ENCODE measurements at regions of chr2 and their contacts with region 1.

Region 1: DNA sequence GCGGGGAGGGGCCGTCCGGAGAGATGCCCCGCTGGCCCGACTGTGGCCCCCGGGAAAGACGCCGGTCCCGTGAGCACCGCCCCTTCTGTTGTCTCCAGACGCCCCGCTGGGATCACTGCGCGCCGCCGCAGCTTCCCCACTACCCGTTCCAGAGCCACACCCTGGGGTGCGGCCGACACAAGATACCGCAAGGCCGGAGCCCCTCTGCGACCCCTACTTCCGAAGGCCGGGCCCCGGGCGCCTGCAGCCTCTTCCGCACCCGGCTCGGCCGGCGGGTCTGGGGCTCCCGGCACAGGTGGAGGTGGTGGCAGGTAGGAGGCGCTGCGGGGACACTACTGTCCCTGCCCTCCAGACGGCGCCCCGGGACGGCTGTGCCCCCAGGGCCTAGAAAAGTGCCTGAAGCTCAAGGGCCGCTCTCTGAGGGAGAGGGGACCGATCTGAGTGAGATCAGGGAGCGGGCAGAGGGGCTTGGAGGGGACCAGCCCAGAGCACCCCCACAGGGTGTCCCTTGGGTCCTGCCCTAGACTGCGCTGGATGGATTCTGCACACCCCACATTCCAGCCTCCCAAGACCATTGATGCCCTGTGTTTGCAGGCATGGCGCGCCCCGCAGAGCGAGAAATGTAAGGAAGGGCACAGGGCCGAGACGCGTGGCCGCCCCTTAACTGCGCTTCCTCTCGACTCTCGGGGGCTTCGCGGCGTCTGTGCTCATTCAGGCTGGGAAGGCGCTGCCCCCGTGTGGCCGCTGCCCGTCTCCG is 80.0 kb downstream of the GFPT1 start:
- DNase-seq: peak; percentile 78
- ATAC-seq: peak; percentile 78
- H3K4me3 ChIP-seq: peak overlapping the region; percentile 78
- H3K27ac ChIP-seq: no peak overlapping the region
- H3K4me1 ChIP-seq: peaks cover 17% of the 10 kb centered on the region
- H3K27me3 ChIP-seq: no peaks in the 10 kb centered on the region
- CTCF ChIP-seq: peak; percentile 88

Region 2: DNA sequence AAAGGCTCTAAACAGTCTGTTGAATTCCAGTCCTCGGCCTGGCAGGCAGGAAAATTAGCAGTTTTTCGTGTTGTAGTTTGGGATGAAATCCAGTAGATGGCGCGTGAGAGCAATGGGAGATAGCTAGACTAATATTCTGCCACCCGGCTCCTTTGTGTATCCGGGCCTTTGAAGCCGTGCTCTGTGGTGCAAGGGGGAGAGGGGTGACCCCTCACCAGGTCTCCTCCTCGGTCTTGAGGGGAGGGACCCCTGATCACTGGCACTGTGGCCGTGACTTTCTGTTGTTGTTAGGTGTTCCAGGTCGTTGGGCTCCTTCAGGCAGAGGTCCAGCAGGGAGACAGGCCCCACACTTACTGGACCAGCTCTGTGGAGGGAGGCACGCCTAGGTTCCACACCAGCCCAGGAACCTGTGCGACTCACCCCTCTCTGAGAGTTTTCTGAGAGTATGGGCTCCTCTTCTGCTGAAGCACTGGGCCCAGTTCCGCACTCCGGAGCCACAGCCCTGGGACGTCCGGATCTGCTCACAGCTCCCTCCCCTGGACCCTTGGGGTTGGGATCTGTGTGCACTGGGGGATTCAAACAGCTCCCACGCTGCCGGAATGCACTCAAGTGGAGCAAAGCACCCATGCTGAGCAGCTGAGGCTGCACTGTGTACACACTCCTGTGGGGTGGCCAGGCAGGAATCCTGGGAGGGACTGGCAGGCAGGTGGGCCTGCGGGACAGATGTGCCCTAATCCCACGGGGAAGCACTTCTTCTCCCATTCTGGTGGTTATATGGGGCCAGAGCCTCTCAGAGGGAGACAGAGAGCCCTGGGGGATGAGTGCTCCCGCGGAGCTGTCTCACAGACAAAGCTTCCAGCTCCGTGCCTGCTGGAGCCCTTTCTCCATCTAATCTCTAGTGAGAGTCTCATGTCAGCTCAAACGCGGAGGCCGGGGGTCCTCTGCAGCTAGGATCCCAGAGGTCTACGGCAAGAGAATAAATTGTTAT is 363.1 kb before region 1 on chr2:
- CTCF ChIA-PET with region 1: interaction called, 3 read pairs
- POLR2A ChIA-PET with region 1: no interaction called
- intact Hi-C with region 1: loop called (anchors 2 kb)
- DNase-seq: peak; percentile 89
- ATAC-seq: peak; percentile 93
- H3K4me3 ChIP-seq: no peak overlapping the region
- H3K27ac ChIP-seq: no peak overlapping the region
- H3K4me1 ChIP-seq: peaks cover 10% of the 10 kb centered on the region; the same call in 1 of the 2 replicates
- H3K27me3 ChIP-seq: no peaks in the 10 kb centered on the region
- CTCF ChIP-seq: peak; percentile 88

Region 3: GRCh38 chr2:69012310-69013141 is 294.5 kb before region 1 on chr2:
- CTCF ChIA-PET with region 1: interaction called, 6 read pairs
- POLR2A ChIA-PET with region 1: no interaction called
- intact Hi-C with region 1: loop called (anchors 1 kb)
- DNase-seq: peak; percentile 68
- ATAC-seq: peak; percentile 51
- H3K4me3 ChIP-seq: peak overlapping the region; percentile 89
- H3K27ac ChIP-seq: peak overlapping the region; percentile 11
- H3K4me1 ChIP-seq: peaks cover 8% of the 10 kb centered on the region; the same call in 1 of the 2 replicates
- H3K27me3 ChIP-seq: no peaks in the 10 kb centered on the region
- CTCF ChIP-seq: peak; percentile 72

Region 4: GRCh38 chr2:69026026-69026425 is 281.0 kb before region 1 on chr2:
- CTCF ChIA-PET with region 1: no interaction called
- POLR2A ChIA-PET with region 1: no interaction called
- intact Hi-C with region 1: loop called (anchors 1 kb)
- DNase-seq: peak; percentile 80
- ATAC-seq: peak; percentile 70
- H3K4me3 ChIP-seq: no peak overlapping the region
- H3K27ac ChIP-seq: no peak overlapping the region
- H3K4me1 ChIP-seq: peaks cover 10% of the 10 kb centered on the region
- H3K27me3 ChIP-seq: no peaks in the 10 kb centered on the region
- CTCF ChIP-seq: peak; percentile 91

Region 5: DNA sequence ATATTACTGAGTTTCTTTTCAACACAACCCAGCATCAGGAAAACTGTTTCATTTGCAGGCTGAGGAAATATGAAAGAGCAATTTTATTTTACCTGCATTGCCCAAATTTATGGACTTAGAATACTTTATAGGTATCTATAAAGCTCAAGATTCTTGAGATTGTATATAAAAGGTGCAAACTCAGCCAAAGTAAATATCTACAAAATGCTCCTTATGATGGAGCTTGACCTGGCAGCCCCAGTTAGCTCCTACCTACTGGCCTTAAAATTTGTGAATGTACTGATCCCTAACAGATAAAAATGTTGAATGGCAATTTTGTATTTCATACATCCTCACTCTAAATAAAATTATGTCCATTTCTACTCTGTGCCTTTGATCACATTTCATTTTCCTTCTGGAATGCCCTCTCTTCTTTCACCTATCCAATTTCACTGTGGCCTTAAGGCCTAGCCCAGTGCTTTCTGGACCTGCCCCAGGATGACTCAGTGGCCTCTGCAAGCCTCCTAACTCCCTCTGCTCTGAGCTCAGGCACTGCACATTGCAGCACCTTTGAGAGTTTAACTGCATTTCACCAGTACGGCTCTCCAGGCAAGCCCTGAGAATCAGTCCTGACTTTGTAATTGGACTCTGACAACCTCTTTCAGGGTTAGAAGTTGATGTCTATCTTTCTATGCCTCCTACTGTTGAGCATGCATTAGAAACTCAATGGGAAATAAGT is 168.0 kb before region 1 on chr2:
- CTCF ChIA-PET with region 1: no interaction called
- POLR2A ChIA-PET with region 1: no interaction called
- intact Hi-C with region 1: loop called (anchors 2 kb)
- DNase-seq: peak; percentile 94
- ATAC-seq: peak; percentile 91
- H3K4me3 ChIP-seq: peak overlapping the region; percentile 38
- H3K27ac ChIP-seq: peak overlapping the region; percentile 91
- H3K4me1 ChIP-seq: peaks cover 55% of the 10 kb centered on the region
- H3K27me3 ChIP-seq: no peaks in the 10 kb centered on the region
- CTCF ChIP-seq: no peak